Activated CD4-positive, alpha-beta T cell treated with anti-CD3 and anti-CD28 coated beads for 36 hours (primary cell): ENCODE measurements at regions of chr2 and their contacts with region 1.

Region 1: GRCh38 chr2:96554293-96555145 is 18.0 kb downstream of the ARID5A start:
- DNase-seq: peak; percentile 86
- ATAC-seq: peak; percentile 42
- H3K4me3 Mint-ChIP-seq: peak overlapping the region; percentile 32
- H3K27ac Mint-ChIP-seq: peak overlapping the region; percentile 75
- H3K4me1 Mint-ChIP-seq: peaks cover 29% of the 10 kb centered on the region
- H3K27me3 Mint-ChIP-seq: no peaks in the 10 kb centered on the region

Region 2: DNA sequence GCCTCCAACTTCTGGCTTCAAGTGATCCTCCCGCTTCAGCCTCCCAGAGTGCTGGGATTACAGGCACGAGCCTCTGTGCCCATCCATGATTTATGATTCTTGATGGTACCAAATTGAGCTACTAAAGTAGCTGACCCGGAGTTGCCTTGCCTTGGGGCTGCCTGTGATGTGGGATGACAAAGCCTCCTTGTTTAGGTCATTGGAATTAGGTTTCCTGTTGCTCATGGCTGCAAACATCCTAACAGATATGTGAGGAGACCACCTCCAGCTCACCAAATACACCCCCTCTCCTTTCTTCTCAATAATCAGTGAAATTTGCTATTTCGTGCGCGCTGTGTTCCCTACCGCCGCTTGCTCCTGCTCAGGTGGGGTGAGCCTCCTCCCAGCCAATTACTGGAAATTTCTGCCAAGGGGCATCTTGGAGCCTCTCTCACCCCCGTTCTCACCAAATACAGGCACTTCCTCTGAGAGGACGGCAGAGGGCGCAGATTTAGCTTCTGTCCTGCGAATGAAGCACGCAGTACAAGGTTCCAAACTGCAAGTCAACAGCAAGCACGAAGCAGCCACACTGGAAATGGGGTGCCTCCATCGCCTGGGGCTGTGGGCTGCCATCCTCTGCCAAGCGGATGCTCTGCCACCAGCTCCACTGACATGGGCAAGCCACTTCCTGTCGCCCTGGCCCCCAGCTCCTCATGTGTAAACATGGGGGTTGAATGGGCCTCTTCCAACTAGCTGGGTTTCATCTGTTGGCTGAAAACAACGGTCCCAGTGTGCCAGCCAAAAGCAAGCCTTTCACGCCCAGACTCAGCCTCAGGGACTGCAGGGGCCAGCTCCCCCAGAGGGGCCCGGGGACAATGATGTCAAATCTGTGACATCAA is 147.2 kb before region 1 on chr2:
- CTCF ChIA-PET with region 1: interaction called, 30 read pairs
- POLR2A ChIA-PET with region 1: interaction called, 5 read pairs
- intact Hi-C with region 1: loop called (anchors 1 to 5 kb)
- DNase-seq: peak; percentile 83
- ATAC-seq: peak; percentile 93
- H3K4me3 Mint-ChIP-seq: no peak overlapping the region
- H3K27ac Mint-ChIP-seq: peak overlapping the region; percentile 87
- H3K4me1 Mint-ChIP-seq: peaks cover 38% of the 10 kb centered on the region
- H3K27me3 Mint-ChIP-seq: no peaks in the 10 kb centered on the region

Region 3: DNA sequence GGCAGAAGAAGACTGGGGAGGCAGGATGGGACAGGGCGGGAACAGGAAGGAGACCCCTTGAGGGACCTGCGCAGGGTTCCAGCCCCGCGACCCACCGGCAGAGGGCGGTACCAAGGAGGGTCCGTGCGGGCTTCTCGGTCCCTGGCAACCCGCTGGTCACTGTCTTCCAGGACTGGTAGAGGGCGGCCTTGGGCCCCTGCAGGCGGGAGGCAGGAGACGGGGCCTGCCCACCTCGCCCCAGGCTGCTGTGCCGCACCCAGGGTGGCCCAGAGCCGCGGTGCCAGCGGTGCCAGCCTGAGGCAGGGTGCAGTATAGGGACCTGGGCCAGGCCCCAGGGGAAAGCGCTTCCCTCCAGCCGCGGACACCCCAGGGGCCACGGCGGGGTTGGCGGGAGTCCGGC is 83.9 kb before region 1 on chr2:
- CTCF ChIA-PET with region 1: no interaction called
- POLR2A ChIA-PET with region 1: no interaction called
- intact Hi-C with region 1: loop called in 1 of 2 experiments (anchors 2 kb)
- DNase-seq: peak; percentile 78
- ATAC-seq: peak; percentile 87
- H3K4me3 Mint-ChIP-seq: no peak overlapping the region
- H3K27ac Mint-ChIP-seq: no peak overlapping the region
- H3K4me1 Mint-ChIP-seq: peaks cover 6% of the 10 kb centered on the region
- H3K27me3 Mint-ChIP-seq: no peaks in the 10 kb centered on the region

Region 4: DNA sequence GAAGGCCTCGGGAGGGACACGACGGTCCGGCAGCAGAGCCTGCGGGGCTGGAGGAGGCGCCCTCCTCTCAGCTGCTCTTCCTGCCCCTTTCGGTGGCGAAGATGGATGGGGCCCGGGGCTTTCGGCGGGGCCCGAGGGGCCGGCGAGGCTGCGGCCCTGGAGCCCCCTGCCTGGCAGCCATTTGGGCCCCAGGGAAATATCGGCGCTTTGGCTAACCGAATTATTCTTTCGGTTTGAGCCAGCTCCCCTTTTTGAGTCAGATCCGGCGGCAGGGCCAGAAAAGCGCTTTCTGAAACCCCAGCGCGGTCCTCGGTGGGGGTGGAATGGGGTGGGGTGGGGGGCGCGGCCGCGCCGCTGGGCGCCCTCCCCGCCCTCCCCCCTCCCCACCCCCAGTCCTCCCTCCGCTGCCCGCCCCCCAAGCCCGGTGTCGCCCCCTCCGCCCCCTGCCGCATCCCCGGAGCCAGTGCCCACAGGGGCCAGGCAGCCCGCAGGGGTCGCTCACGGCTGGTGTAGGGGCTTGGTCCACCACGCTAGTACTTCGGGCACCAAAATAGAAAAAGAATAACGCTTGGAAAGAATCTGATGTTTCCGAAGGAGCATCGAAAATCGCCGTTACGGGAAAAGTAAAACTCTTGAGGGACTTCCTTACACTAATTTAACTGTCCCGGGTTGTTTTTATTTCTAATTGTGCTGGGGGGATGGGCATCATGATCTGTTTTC is 27.1 kb before region 1 on chr2:
- CTCF ChIA-PET with region 1: interaction called, 19 read pairs
- POLR2A ChIA-PET with region 1: interaction called, 14 read pairs
- intact Hi-C with region 1: loop called in 1 of 2 experiments (anchors 1 kb)
- DNase-seq: peak; percentile 87
- ATAC-seq: no peak
- H3K4me3 Mint-ChIP-seq: peak overlapping the region; percentile 76
- H3K27ac Mint-ChIP-seq: peak overlapping the region; percentile 98
- H3K4me1 Mint-ChIP-seq: peaks cover 88% of the 10 kb centered on the region
- H3K27me3 Mint-ChIP-seq: peaks cover 2% of the 10 kb centered on the region

Region 5: DNA sequence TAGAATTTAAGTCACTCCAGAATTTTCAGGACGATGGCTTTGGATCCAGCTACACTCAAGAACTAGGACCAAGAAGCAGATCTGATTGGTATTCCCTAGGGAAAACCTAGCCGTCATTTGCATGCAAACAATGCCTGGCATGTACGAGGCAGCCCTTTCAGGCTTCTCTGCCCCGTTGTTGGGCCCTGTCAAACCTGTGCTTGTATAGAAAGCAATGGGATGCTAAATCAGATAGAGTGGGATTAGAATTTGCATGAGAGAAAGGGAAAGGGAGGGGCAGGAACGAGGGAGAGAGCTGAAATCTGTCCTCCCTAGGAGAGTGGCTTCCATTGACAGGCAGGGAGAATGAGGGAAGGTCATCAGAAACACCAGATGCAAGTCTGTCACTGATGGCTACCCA is 10.6 kb after region 1 on chr2:
- CTCF ChIA-PET with region 1: interaction called, 10 read pairs
- POLR2A ChIA-PET with region 1: no interaction called
- intact Hi-C with region 1: no loop called
- DNase-seq: no peak
- ATAC-seq: no peak
- H3K4me3 Mint-ChIP-seq: no peak overlapping the region
- H3K27ac Mint-ChIP-seq: no peak overlapping the region
- H3K4me1 Mint-ChIP-seq: no peaks in the 10 kb centered on the region
- H3K27me3 Mint-ChIP-seq: no peaks in the 10 kb centered on the region

Region 6: DNA sequence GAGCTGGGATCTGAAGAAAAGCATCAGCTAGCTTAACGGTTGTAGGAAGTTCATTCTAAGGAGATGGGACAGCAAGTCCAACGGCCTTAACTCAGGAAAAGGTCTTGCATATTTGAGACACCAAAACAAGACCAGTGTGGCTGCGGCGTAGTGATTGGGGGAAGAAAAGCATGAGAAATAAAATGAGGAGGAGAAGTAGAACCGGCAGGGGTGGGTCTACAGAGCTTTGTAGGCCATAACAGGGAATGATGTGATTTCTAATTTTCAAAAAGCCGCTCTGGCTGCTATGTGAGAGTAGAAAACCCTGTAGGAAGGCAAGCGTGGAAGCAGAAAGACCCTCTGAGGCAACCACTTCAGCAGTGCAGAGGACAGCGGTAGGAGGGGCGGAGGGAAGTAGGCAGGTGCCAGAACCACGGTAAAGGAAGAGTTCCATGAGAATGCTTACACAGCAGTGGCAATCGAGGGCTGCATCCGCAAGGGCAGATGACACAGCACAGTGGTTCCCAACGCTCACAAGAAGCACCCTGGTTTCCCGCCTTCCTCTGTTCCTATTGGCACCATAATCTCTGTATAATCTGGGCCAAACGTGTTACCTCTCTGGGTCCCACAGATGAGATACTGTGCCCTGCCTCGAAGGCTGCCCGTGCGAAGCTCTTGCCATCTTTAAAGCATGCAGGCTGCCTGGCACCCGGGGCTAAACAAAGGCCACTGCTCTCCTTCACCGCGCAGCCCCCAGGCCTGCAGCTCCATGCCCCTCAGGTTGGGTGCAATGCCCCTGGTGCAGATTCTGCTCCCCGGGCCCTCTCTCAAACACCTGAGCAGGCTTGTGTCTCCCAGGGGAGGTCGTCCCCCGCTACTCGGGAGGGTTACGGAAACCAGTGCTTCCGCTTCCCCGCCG is 302.5 kb after region 1 on chr2:
- CTCF ChIA-PET with region 1: no interaction called
- POLR2A ChIA-PET with region 1: no interaction called
- intact Hi-C with region 1: no loop called
- DNase-seq: peak; percentile 66
- ATAC-seq: no peak
- H3K4me3 Mint-ChIP-seq: peak overlapping the region; percentile 90
- H3K27ac Mint-ChIP-seq: peak overlapping the region; percentile 79
- H3K4me1 Mint-ChIP-seq: peaks cover 36% of the 10 kb centered on the region
- H3K27me3 Mint-ChIP-seq: no peaks in the 10 kb centered on the region